Heart right ventricle (tissue), 16 donors: ENCODE measurements at regions of chr13 and their contacts with region 1.

Region 1: GRCh38 chr13:41905600-41906254 is 55.2 kb downstream of the VWA8 start:
- DNase-seq: no peak
- ATAC-seq: peak in 4 of 8 donors; percentile 35 to 52 (median 46)
- H3K4me3 ChIP-seq: no peak overlapping the region
- H3K27ac ChIP-seq: no peak overlapping the region
- H3K4me1 ChIP-seq: no peaks in the 10 kb centered on the region
- H3K27me3 ChIP-seq: no peaks in the 10 kb centered on the region
- CTCF ChIP-seq: peak; percentile 17 to 72 (median 57)

Region 2: DNA sequence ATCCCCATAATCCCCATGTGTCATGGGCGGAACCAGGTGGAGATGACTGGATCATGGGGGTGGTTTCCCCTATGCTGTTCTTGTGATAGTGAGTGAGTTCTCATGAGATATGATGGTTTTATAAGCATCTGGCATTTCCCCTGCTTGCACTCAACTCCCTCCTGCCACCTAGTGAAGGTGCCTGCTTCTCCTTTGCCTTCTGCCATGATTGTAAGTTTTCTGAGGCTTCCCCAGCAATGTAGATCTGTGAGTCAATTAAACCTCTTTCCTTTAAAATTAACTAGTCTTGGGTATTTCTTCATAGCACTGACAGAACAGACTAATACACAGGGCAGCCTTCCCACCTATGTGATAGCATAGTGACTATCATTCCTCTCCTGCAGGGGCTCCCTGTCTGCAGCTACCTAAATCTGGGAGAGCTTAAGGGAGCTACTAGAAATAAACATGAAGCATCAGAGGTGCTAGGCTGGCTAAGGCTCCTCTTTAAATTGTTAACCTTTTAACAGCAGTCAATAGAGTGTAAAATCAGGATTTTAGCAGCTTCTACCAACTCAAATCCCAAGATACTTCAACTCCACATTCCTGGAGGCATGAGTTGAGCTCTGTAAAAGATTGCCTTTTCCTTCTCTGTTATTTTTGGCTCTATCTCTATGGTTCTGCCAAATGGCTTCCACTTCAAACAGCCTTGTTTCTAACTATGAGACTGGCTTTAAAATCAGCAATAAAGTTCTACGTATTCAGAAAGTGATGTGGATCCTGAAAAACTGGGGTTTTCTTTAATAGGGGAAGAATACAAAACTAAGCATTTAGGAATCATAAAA is 57.1 kb before region 1 on chr13:
- intact Hi-C with region 1: loop called in 1 of 10 experiments (anchors 2 kb)
- DNase-seq: no peak
- ATAC-seq: peak in 6 of 8 donors; percentile 38 to 72 (median 62)
- H3K4me3 ChIP-seq: no peak overlapping the region
- H3K27ac ChIP-seq: peak overlapping the region in 6 of 10 donors; percentile 4 to 70 (median 36)
- H3K4me1 ChIP-seq: peaks cover 3 to 17% (median 8%) of the 10 kb centered on the region in 9 donors
- H3K27me3 ChIP-seq: no peaks in the 10 kb centered on the region
- CTCF ChIP-seq: peak in 4 of 9 donors; percentile 10 to 50 (median 42)

Region 3: GRCh38 chr13:41931337-41931736 is 25.6 kb after region 1 on chr13:
- intact Hi-C with region 1: no loop called
- DNase-seq: no peak
- ATAC-seq: no peak
- H3K4me3 ChIP-seq: no peak overlapping the region
- H3K27ac ChIP-seq: no peak overlapping the region
- H3K4me1 ChIP-seq: peaks cover 0 to 19% (median 15%) of the 10 kb centered on the region in 9 donors
- H3K27me3 ChIP-seq: no peaks in the 10 kb centered on the region
- CTCF ChIP-seq: no peak

Region 4: GRCh38 chr13:42102961-42103865 is 197.5 kb after region 1 on chr13:
- intact Hi-C with region 1: loop called in 3 of 10 experiments (anchors 5 to 10 kb)
- DNase-seq: no peak
- ATAC-seq: no peak
- H3K4me3 ChIP-seq: no peak overlapping the region
- H3K27ac ChIP-seq: no peak overlapping the region
- H3K4me1 ChIP-seq: peaks cover 0 to 34% (median 18%) of the 10 kb centered on the region in 9 donors
- H3K27me3 ChIP-seq: no peaks in the 10 kb centered on the region
- CTCF ChIP-seq: no peak